Activated CD4-positive, alpha-beta T cell treated with anti-CD3 and anti-CD28 coated beads for 36 hours (primary cell): ENCODE measurements at regions of chr1 and their contacts with region 1.

Region 1: DNA sequence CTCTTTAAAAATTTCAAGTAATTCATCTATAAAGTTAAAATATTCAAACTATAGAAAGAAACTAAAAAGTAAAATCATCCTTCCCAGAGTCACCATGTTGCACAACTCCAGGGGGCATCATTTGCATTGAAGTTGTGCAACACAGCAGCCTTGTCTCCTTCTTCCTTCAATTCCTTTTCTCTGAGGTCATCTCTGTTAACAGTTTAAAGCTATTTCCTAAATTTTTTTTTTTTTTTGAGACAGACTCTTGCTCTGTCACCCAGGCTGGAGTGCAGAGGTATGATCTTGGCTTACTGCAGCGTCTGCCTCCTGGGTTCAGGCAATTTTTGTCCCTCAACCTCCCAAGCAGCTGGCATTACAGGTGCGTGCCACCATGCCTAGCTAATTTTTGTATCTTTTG is 7.1 kb downstream of the RHBG start:
- DNase-seq: no peak
- ATAC-seq: no peak
- H3K4me3 Mint-ChIP-seq: no peak overlapping the region
- H3K27ac Mint-ChIP-seq: no peak overlapping the region
- H3K4me1 Mint-ChIP-seq: no peaks in the 10 kb centered on the region
- H3K27me3 Mint-ChIP-seq: peaks cover 16% of the 10 kb centered on the region

Region 2: DNA sequence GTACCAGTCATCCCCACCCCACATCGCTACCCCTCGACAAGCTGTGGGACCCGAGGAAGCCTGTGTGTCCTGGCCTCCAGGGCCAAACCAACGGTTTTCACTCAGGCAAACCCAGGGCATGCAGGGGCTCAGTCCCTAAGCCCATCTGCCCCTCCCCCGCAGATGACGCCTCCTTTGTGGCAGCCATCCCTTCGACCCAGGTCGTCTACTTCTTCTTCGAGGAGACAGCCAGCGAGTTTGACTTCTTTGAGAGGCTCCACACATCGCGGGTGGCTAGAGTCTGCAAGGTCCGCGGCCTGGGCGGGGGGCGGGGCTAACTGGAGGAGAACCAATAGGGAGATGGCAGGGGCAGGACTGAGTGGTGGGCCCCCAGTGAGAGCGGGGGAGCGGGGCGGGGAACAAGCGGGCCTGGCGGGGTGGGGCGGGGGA is 215.4 kb before region 1 on chr1:
- CTCF ChIA-PET with region 1: no interaction called
- POLR2A ChIA-PET with region 1: no interaction called
- intact Hi-C with region 1: no loop called
- DNase-seq: peak; percentile 86
- ATAC-seq: peak; percentile 60
- H3K4me3 Mint-ChIP-seq: peak overlapping the region; percentile 68
- H3K27ac Mint-ChIP-seq: peak overlapping the region; percentile 88
- H3K4me1 Mint-ChIP-seq: peaks cover 84% of the 10 kb centered on the region
- H3K27me3 Mint-ChIP-seq: no peaks in the 10 kb centered on the region

Region 3: DNA sequence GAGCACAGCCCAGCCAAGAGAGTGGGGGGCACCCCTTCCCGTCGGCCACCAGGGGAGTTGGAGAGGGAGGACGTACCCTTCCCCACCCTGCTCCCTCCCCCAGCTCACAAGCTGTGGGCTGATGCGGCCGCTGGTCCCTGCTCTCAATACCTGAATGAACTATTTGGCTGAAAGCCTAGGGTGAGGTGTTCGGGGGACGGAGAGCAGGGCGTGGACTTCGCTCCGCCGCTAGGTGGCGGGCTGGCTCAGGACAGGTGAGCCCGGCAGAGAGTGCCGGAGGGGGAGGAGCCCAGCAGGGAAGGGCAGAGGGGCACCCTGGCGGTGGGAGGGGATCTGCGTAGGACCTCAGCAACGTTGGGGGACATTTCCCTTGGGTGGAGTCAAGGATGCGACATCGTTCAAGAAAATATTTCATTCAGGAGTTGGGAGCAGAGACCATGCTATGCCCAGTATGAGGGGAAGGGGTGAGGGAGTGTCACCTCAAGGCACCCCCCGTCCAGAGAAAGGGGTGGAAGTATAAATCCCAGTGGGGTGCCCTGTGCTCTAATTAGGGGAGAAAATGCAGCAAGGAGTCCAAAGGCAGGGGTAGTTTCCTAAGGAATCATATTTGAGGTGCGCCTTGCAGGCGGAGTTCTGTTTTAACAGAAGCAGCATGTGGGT is 19.1 kb before region 1 on chr1:
- CTCF ChIA-PET with region 1: interaction called, 6 read pairs
- POLR2A ChIA-PET with region 1: no interaction called
- intact Hi-C with region 1: loop called in 1 of 2 experiments (anchors 2 kb)
- DNase-seq: peak; percentile 87
- ATAC-seq: peak; percentile 95
- H3K4me3 Mint-ChIP-seq: no peak overlapping the region
- H3K27ac Mint-ChIP-seq: no peak overlapping the region
- H3K4me1 Mint-ChIP-seq: peaks cover 8% of the 10 kb centered on the region
- H3K27me3 Mint-ChIP-seq: peaks cover 6% of the 10 kb centered on the region

Region 4: DNA sequence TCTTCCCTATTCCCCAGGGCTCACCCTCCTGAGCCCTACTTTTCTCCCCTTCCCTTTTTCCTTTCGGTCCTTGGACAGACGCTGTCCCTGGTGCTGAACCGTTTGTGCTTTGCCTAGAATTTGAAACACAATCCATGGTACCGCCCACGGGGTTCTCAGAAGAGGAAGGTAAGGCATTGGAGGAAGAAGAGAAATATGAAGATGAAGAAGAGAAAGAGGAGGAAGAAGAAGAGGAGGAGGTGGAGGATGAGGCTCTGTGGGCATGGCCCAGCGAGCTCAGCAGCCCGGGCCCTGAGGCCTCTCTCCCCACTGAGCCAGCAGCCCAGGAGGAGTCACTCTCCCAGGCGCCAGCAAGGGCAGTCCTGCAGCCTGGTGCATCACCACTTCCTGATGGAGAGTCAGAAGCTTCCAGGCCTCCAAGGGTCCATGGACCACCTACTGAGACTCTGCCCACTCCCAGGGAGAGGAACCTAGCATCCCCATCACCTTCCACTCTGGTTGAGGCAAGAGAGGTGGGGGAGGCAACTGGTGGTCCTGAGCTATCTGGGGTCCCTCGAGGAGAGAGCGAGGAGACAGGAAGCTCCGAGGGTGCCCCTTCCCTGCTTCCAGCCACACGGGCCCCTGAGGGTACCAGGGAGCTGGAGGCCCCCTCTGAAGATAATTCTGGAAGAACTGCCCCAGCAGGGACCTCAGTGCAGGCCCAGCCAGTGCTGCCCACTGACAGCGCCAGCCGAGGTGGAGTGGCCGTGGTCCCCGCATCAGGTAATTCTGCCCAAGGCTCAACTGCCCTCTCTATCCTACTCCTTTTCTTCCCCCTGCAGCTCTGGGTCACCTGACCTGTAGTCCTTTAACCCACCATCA is 276.2 kb after region 1 on chr1:
- CTCF ChIA-PET with region 1: no interaction called
- POLR2A ChIA-PET with region 1: no interaction called
- intact Hi-C with region 1: no loop called
- DNase-seq: peak; percentile 49
- ATAC-seq: peak; percentile 40
- H3K4me3 Mint-ChIP-seq: no peak overlapping the region
- H3K27ac Mint-ChIP-seq: no peak overlapping the region
- H3K4me1 Mint-ChIP-seq: peaks cover 10% of the 10 kb centered on the region
- H3K27me3 Mint-ChIP-seq: peaks cover 67% of the 10 kb centered on the region